CD4-positive, alpha-beta T cell (primary cell): ENCODE measurements at regions of chr5 and their contacts with region 1.

Region 1: GRCh38 chr5:80225934-80226326 is 29.9 kb downstream of the SERINC5 start:
- DNase-seq: no peak
- ATAC-seq: peak; percentile 51
- H3K4me3 ChIP-seq: no peak overlapping the region
- H3K4me3 Mint-ChIP-seq: peak overlapping the region; percentile 64
- H3K27ac ChIP-seq: no peak overlapping the region
- H3K27ac Mint-ChIP-seq: peak overlapping the region; percentile 91
- H3K4me1 ChIP-seq: peaks cover 72% of the 10 kb centered on the region
- H3K4me1 Mint-ChIP-seq: peaks cover 69% of the 10 kb centered on the region
- H3K27me3 ChIP-seq: no peaks in the 10 kb centered on the region
- H3K27me3 Mint-ChIP-seq: no peaks in the 10 kb centered on the region
- CTCF ChIP-seq: no peak

Region 2: DNA sequence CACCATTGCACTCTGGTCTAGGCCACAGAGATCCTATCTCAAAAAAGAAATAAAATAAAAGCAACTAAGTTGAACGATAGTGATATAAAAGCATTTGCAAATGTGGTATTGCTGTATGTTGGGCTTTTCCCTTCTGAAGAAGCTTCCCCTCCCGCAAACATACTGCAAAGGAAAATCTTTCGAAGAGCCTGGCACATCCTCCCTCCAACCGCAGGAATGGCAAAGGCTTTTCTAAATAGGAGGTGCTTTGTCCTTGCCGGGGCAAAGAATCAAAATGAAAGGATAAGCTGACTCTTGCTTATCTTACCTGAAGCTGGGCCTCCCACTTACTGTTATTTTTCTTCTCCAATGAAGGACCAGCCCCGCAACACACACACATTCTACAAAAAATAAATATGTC is 15.9 kb before region 1 on chr5:
- CTCF ChIA-PET with region 1: no interaction called
- POLR2A ChIA-PET with region 1: no interaction called
- intact Hi-C with region 1: loop called in 1 of 2 experiments (anchors 2 kb)
- DNase-seq: no peak
- ATAC-seq: no peak
- H3K4me3 ChIP-seq: no peak overlapping the region
- H3K4me3 Mint-ChIP-seq: peak overlapping the region; percentile 58
- H3K27ac ChIP-seq: peak overlapping the region in 1 of 2 donors; percentile 21
- H3K27ac Mint-ChIP-seq: peak overlapping the region; percentile 80
- H3K4me1 ChIP-seq: peaks cover 82% of the 10 kb centered on the region
- H3K4me1 Mint-ChIP-seq: peaks cover 98% of the 10 kb centered on the region
- H3K27me3 ChIP-seq: no peaks in the 10 kb centered on the region
- H3K27me3 Mint-ChIP-seq: no peaks in the 10 kb centered on the region
- CTCF ChIP-seq: no peak